ENCODE measurements at regions of chr11 and their contacts with region 1.

Region 1: DNA sequence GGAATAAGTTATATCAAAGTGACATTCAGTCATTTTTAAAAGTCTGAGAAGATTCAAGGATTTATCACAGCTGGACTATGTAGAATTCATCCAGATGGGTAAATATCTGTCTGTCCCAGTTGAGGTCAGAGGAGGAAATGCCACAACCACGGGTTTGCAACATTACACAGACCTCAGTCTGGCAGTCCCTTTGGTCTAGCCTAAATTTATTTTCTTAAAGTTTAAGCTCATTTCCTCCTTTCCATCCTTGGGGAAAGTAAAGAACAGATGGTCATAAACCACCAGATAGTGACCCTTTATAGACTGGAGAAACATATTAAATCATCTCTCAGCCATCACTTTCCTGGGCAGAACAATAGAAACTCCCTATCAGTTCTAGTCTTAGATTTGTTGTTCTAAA is 238.4 kb upstream of the DDI1 start:
- DNase-seq: no peak
- ATAC-seq: no peak
- H3K4me3 ChIP-seq: no peak overlapping the region
- H3K27ac ChIP-seq: no peak overlapping the region
- H3K4me1 ChIP-seq: peaks cover 0 to 6% of the 10 kb centered on the region in 2 donors
- H3K27me3 ChIP-seq: no peaks in the 10 kb centered on the region

Region 2: DNA sequence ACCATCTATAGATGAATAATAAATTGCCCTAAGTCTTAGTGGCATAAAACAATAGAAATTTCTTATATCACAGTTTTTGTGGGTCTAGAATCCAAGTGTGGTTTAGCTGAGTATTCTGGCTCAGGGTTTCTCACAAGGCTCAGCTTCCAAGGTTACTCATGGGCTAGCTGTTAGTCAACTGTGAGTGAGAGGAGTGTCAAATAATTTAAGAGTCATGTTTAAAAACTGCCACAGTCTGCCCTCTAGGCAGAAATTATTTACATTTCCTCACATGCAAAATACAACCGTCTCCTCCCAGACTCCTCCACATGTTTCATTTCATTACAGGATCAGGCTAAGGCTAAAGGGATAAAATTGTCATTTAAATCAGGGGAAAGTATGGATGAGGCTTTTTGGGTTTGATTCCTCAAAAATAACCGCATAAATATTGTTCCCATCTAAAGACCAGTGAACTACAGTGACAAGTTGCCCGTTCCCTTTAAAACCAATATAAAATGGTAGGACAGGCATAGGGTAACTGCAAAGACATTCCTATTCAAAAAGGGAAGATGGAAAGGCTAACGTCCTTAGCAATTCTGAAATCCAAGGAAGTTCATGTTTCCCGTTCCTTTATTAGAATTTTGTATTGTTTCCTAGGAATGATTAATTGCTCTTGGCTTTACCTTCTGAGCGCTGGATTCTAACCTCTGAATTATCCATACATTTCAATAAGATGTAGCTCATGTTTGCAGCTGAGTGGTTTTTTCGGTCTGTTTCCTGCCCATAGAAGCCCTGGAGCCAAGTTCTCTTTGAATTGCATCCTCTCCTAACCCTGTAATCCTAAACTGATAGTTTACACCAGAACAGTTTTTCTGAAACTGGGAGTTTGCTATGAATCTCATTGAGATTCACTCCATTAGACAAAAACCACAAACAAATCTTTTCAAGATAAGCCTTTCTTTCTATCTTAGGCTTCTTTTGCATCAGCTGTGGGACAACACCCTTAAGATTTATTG is 364.3 kb before region 1 on chr11:
- intact Hi-C with region 1: no loop called
- DNase-seq: no peak
- ATAC-seq: no peak
- H3K4me3 ChIP-seq: no peak overlapping the region
- H3K27ac ChIP-seq: no peak overlapping the region
- H3K4me1 ChIP-seq: no peaks in the 10 kb centered on the region
- H3K27me3 ChIP-seq: no peaks in the 10 kb centered on the region

Region 3: GRCh38 chr11:103515283-103515682 is 282.7 kb before region 1 on chr11:
- intact Hi-C with region 1: no loop called
- DNase-seq: no peak
- ATAC-seq: no peak
- H3K4me3 ChIP-seq: no peak overlapping the region
- H3K27ac ChIP-seq: no peak overlapping the region
- H3K4me1 ChIP-seq: no peaks in the 10 kb centered on the region
- H3K27me3 ChIP-seq: no peaks in the 10 kb centered on the region

Region 4: DNA sequence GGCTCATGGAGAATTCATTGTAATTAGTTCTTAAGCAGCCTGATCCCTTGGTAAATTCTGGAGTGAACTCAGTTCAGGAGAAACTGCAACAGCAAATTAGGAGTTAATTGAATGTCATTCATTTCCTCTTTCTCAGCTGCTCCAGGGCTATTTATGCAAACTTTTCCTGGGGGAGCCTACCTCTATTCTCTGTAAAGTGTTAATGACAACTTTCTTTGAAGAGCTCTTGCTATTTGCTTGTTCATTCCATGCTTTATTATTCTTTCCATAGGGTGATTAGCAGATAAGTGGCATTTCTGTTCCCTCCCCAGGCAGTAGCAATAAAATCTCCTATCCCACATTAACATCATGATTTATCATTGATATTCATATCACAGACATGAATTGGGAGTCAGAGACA is 29.2 kb before region 1 on chr11:
- intact Hi-C with region 1: no loop called
- DNase-seq: no peak
- ATAC-seq: no peak
- H3K4me3 ChIP-seq: no peak overlapping the region
- H3K27ac ChIP-seq: no peak overlapping the region
- H3K4me1 ChIP-seq: peaks cover 0 to 6% of the 10 kb centered on the region in 2 donors
- H3K27me3 ChIP-seq: no peaks in the 10 kb centered on the region

Region 5: DNA sequence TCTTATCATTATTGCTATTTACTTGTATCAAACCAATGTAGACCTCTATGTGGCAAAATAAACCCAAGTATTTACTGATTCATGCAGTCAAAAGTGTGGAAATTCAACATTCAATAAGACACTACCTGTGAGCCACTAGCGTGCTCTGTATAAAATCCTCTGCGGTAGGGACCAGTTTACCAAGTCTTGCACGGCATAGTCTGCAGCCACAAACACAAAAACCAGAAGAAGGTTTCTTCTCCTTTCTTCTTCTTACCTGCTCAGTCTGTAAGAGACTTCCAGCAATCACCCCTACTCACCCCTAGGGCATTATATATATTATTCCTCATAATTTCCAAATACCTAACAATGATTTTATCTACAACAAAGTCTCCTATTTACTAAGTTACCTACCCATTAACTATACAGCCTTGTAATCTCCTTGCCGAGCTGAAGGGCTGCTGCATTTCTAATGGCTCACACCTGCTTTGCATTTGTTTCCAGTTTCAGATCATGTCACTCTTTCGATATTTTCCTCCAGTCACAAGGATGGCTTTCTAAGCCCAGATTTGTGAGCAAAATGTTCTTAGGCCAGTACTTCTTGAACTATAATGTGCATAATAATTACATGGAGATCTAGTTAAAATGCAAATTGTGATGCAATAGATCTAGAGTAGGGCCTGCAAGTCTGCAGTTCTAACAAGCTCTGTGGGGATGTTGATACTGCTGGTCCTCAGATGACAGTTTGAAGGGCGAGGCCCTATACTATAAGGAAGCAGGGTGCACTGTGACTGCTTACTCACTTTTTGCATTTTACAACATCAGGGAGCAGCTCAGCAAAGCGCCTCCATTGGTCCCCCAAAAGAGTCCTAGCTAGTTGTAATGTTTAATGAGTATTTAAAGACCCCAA is 46.5 kb after region 1 on chr11:
- intact Hi-C with region 1: loop called in 1 of 2 experiments (anchors 5 kb)
- DNase-seq: no peak
- ATAC-seq: no peak
- H3K4me3 ChIP-seq: no peak overlapping the region
- H3K27ac ChIP-seq: no peak overlapping the region
- H3K4me1 ChIP-seq: peaks cover 0 to 2% of the 10 kb centered on the region in 2 donors
- H3K27me3 ChIP-seq: no peaks in the 10 kb centered on the region

Region 6: DNA sequence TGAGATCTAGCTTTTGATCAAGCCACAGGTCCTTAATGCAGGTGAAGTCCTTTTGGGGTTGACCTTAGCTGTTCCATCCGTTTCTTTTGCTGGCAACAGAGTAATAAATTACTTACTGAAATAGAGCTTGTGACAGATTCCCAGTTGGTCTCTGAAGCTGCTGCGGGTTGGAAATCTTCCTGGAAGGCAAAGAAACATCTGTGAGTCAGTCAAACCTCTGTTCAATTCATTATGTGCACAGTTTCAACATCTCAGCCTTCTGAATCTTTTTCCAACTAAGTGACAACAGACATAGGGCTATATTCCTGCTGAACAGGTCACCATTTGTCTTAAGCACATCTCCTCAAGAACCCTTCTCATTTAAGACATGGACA is 149.5 kb after region 1 on chr11:
- intact Hi-C with region 1: loop called in 1 of 2 experiments (anchors 10 kb)
- DNase-seq: no peak
- ATAC-seq: peak; percentile 41
- H3K4me3 ChIP-seq: peak overlapping the region in 1 of 2 donors; percentile 5
- H3K27ac ChIP-seq: peak overlapping the region in 1 of 2 donors; percentile 79
- H3K4me1 ChIP-seq: peaks cover 5% of the 10 kb centered on the region in 2 donors
- H3K27me3 ChIP-seq: no peaks in the 10 kb centered on the region

Region 7: GRCh38 chr11:104118105-104118744 is 320.2 kb after region 1 on chr11:
- intact Hi-C with region 1: loop called in 1 of 2 experiments (anchors 10 kb)
- DNase-seq: no peak
- ATAC-seq: no peak
- H3K4me3 ChIP-seq: no peak overlapping the region
- H3K27ac ChIP-seq: no peak overlapping the region
- H3K4me1 ChIP-seq: peaks cover 0 to 2% of the 10 kb centered on the region in 2 donors
- H3K27me3 ChIP-seq: no peaks in the 10 kb centered on the region

Measured in aorta (tissue), 5 donors.